Breast epithelium (tissue), 4 donors: ENCODE measurements at regions of chr17 and their contacts with region 1.

Region 1: DNA sequence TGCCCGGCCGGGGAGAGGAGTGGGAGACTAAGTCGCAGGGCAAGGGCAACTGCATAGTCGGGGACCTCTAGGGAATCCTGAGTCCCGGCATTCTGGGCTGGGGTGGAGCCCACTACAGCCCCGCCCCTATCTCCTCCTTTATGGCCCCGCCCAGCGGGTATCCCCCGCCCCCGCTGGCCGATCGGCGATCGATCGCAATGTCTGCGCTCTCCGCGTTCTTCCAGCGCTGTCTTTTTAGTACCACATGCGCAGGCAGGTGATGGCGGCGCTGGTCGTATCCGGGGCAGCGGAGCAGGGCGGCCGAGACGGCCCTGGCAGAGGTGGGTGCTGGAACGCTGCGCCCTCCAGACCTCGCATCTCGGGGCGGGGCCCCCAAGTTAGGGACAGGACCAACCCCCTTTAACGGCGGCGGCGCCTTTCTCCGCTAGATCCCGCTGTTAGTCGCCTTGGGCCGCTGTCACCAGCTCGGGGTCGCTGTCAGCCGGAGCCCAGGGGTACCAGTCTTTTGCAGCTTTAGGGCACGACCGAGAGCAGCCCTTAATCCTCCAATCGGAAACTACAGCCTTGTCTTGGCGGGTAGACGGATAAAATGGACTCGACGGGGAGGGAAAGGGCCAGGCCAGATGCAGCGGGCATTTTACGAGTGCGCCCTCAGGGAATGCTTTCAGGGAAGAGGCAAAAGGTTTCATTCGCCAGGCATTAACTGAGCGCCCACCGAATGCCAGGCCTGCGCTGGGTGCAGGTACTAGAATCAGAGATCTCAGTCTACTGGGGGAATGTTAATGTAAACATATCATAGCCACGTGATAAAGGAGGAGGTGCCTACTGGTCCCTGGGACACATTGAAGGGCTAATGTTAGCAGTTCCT is at the start of gene DPH1:
- DNase-seq: peak; percentile 74 to 82
- H3K4me3 ChIP-seq: peak within 1 kb of the TSS; percentile 88 to 96 (median 94)
- H3K27ac ChIP-seq: peak within 1 kb of the TSS; percentile 48 to 64
- H3K4me1 ChIP-seq: peaks cover 0 to 7% of the 10 kb centered on the region in 2 donors
- H3K27me3 ChIP-seq: peaks cover 0 to 3% of the 10 kb centered on the region in 2 donors
- CTCF ChIP-seq: no peak
- POLR2A ChIP-seq: no peak
- total RNA-seq, gene DPH1: 28.3 to 66.6 (median 55.7) TPM

Region 2: GRCh38 chr17:1915889-1916288 is 114.3 kb before region 1 on chr17:
- intact Hi-C with region 1: loop called (anchors 10 kb)
- DNase-seq: no peak
- H3K4me3 ChIP-seq: no peak overlapping the region
- H3K27ac ChIP-seq: no peak overlapping the region
- H3K4me1 ChIP-seq: no peaks in the 10 kb centered on the region
- H3K27me3 ChIP-seq: peaks cover 0 to 10% of the 10 kb centered on the region in 2 donors
- CTCF ChIP-seq: no peak
- POLR2A ChIP-seq: no peak

Region 3: GRCh38 chr17:1989135-1989534 is 41.0 kb before region 1 on chr17:
- intact Hi-C with region 1: no loop called
- DNase-seq: no peak
- H3K4me3 ChIP-seq: no peak overlapping the region
- H3K27ac ChIP-seq: peak overlapping the region; percentile 25 to 48
- H3K4me1 ChIP-seq: no peaks in the 10 kb centered on the region
- H3K27me3 ChIP-seq: no peaks in the 10 kb centered on the region
- CTCF ChIP-seq: no peak
- POLR2A ChIP-seq: no peak